ENCODE measurements at regions of chr14 and their contacts with region 1.

Region 1: GRCh38 chr14:61719344-61720293 is 24.3 kb downstream of the HIF1A start:
- DNase-seq: no peak
- ATAC-seq: peak; percentile 40
- H3K4me3 Mint-ChIP-seq: peak overlapping the region; percentile 69
- H3K27ac Mint-ChIP-seq: peak overlapping the region; percentile 84
- H3K4me1 Mint-ChIP-seq: peaks cover 83% of the 10 kb centered on the region
- H3K27me3 Mint-ChIP-seq: no peaks in the 10 kb centered on the region
- CTCF ChIP-seq: no peak

Region 2: DNA sequence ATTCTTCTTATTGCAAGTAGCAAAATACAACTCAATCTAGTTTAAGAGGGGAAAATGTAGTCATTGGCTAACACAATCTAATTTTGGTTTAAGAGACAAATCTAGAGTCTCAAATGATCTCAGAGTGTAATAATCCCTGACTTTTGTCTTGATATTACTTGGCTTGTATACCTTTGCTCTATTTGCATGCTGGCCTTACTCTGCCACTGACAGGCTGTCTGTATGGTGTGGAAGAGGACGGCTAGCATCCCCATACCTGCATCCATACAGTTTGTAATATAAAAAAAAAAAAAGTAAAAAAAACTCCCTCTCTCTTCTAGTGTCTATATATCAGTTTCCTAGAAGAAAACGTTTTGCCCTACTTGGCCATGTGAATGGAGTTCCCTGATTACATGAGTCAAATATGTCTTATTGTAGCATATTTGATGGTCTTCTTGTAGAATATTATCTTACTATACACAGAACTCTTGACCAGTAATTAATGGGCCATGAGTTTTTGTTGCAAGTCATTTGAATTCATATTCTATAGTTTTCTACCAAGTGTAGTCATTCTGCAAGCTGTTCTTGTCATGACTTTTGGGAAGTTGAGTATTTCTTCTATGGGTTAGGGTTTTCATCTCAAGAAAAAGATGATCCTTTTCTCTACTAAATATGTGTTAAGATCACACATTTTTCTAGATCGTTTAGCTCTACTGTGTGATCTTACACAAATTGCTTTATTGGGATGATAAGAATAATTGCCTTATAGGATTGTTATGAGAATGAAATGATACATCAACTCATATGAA is 16.1 kb before region 1 on chr14:
- CTCF ChIA-PET with region 1: interaction called, 5 read pairs
- POLR2A ChIA-PET with region 1: interaction called, 13 read pairs
- intact Hi-C with region 1: loop called (anchors 2 kb)
- DNase-seq: no peak
- ATAC-seq: peak; percentile 30
- H3K4me3 Mint-ChIP-seq: peak overlapping the region; percentile 48
- H3K27ac Mint-ChIP-seq: peak overlapping the region; percentile 46
- H3K4me1 Mint-ChIP-seq: peaks cover 77% of the 10 kb centered on the region
- H3K27me3 Mint-ChIP-seq: no peaks in the 10 kb centered on the region
- CTCF ChIP-seq: no peak

Region 3: GRCh38 chr14:61737915-61738314 is 18.3 kb after region 1 on chr14:
- CTCF ChIA-PET with region 1: no interaction called
- POLR2A ChIA-PET with region 1: interaction called, 8 read pairs
- intact Hi-C with region 1: loop called (anchors 2 kb)
- DNase-seq: no peak
- ATAC-seq: no peak
- H3K4me3 Mint-ChIP-seq: no peak overlapping the region
- H3K27ac Mint-ChIP-seq: peak overlapping the region; percentile 76
- H3K4me1 Mint-ChIP-seq: peaks cover 12% of the 10 kb centered on the region
- H3K27me3 Mint-ChIP-seq: no peaks in the 10 kb centered on the region
- CTCF ChIP-seq: no peak